Natural killer cell (primary cell): ENCODE measurements at regions of chr7 and their contacts with region 1.

Region 1: DNA sequence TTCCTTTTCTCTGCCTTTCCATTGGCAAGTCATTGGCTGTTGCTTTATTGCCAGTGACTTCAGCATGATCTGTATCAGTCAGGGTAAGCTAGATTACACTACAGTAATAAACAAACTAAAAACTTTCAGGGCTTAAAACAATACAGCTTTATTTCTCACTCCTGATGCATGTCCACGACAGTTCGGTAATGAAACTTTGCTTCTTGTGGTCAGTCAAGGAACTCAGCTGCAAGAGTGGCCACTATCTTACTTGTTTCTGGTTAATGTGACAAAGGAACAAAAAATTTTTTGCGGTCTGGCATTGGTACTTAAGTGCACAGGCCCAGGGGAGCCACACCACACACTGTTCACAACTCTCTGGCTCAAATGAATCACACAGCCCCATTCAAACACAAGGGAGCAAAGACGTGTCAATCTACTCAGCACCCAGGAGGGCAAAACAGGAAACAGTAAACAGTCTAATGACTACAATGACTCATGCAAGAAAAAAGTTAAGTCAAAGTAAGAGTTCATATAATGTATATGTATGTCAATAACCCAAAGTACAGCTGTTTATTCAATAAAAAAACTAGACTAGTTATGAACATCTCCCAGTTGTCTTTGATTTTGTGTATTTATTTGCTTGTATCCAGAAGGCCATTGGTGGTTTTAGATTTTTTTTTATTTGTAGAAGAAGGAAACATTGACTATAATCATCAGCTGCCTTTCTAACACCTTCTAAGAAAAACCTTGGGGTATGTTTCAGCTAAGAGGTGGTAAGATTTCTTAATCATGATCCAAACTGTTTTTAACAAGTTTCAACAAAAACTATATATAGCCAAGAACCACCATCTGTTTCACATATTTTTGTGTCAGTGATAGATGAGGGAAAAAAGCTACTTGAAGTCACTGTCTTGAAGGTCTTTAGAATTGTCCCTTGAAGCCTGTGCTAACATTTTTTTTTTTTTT is 134.4 kb upstream of the FAM3C start:
- DNase-seq: peak; percentile 62 to 70
- ATAC-seq: peak; percentile 90 to 97 (median 94)
- H3K4me3 ChIP-seq: no peak overlapping the region
- H3K4me3 Mint-ChIP-seq: peak overlapping the region; percentile 85
- H3K27ac ChIP-seq: peak overlapping the region; percentile 75
- H3K27ac Mint-ChIP-seq: peak overlapping the region; percentile 89 to 92
- H3K4me1 ChIP-seq: peaks cover 10% of the 10 kb centered on the region
- H3K4me1 Mint-ChIP-seq: peaks cover 50 to 51% of the 10 kb centered on the region in 2 donors
- H3K27me3 ChIP-seq: no peaks in the 10 kb centered on the region
- H3K27me3 Mint-ChIP-seq: no peaks in the 10 kb centered on the region
- CTCF ChIP-seq: no peak

Region 2: DNA sequence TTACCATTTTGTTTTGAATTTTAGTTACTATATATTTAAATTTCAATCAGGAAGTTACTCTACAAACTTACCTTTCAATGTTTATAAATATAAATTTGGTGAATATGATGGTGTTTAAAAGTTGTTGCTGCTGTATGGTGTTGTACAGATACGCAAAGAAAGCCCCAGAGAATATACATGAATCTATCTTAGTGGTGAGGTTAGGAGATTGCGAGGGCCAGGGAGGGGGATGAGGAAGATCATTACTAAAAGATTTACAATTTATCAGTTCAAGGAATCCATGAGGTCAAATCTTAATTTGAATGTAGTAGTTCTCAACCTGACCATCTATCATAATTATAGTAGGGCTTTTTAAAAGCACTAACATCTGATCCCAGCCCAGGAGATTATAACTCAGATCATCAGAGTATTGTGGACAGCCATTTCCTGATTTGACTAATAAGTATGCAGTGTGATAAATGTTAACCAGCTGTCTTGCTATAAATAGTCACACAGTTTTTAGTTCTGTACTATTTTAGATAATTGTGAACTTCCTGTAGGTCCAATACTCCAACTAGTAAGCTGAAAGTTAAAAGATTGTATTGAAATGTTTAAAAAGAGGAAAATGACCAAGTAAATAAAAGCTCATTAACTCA is 158.0 kb before region 1 on chr7:
- intact Hi-C with region 1: loop called (anchors 5 kb)
- DNase-seq: peak in 1 of 2 donors; percentile 23
- ATAC-seq: peak; percentile 90 to 92 (median 91)
- H3K4me3 ChIP-seq: peak overlapping the region; percentile 7
- H3K4me3 Mint-ChIP-seq: peak overlapping the region; percentile 84
- H3K27ac ChIP-seq: peak overlapping the region; percentile 74
- H3K27ac Mint-ChIP-seq: peak overlapping the region; percentile 81 to 88
- H3K4me1 ChIP-seq: peaks cover 21% of the 10 kb centered on the region
- H3K4me1 Mint-ChIP-seq: peaks cover 37 to 57% of the 10 kb centered on the region in 2 donors
- H3K27me3 ChIP-seq: no peaks in the 10 kb centered on the region
- H3K27me3 Mint-ChIP-seq: no peaks in the 10 kb centered on the region
- CTCF ChIP-seq: no peak

Region 3: GRCh38 chr7:121395961-121396757 is 134.3 kb before region 1 on chr7 and contains the start of gene FAM3C:
- intact Hi-C with region 1: loop called (anchors 5 kb)
- DNase-seq: peak; percentile 86
- ATAC-seq: peak; percentile 89 to 96 (median 91)
- H3K4me3 ChIP-seq: peak within 1 kb of the TSS; percentile 68
- H3K4me3 Mint-ChIP-seq: peak within 1 kb of the TSS; percentile 92
- H3K27ac ChIP-seq: peak within 1 kb of the TSS; percentile 76
- H3K27ac Mint-ChIP-seq: peak within 1 kb of the TSS; percentile 83 to 90
- H3K4me1 ChIP-seq: peaks cover 2% of the 10 kb centered on the region
- H3K4me1 Mint-ChIP-seq: peaks cover 26 to 28% of the 10 kb centered on the region in 2 donors
- H3K27me3 ChIP-seq: no peaks in the 10 kb centered on the region
- H3K27me3 Mint-ChIP-seq: no peaks in the 10 kb centered on the region
- CTCF ChIP-seq: peak; percentile 97
- total RNA-seq, gene FAM3C: 24.3 to 42.1 (median 37.0) TPM

Region 4: GRCh38 chr7:121410829-121411596 is 119.5 kb before region 1 on chr7:
- intact Hi-C with region 1: no loop called
- DNase-seq: no peak
- ATAC-seq: no peak
- H3K4me3 ChIP-seq: no peak overlapping the region
- H3K4me3 Mint-ChIP-seq: no peak overlapping the region
- H3K27ac ChIP-seq: no peak overlapping the region
- H3K27ac Mint-ChIP-seq: no peak overlapping the region
- H3K4me1 ChIP-seq: no peaks in the 10 kb centered on the region
- H3K4me1 Mint-ChIP-seq: peaks cover 5 to 6% of the 10 kb centered on the region in 2 donors
- H3K27me3 ChIP-seq: no peaks in the 10 kb centered on the region
- H3K27me3 Mint-ChIP-seq: peaks cover 9 to 13% of the 10 kb centered on the region in 2 donors
- CTCF ChIP-seq: no peak

Region 5: GRCh38 chr7:121493553-121493952 is 36.9 kb before region 1 on chr7:
- intact Hi-C with region 1: no loop called
- DNase-seq: no peak
- ATAC-seq: no peak
- H3K4me3 ChIP-seq: no peak overlapping the region
- H3K4me3 Mint-ChIP-seq: no peak overlapping the region
- H3K27ac ChIP-seq: no peak overlapping the region
- H3K27ac Mint-ChIP-seq: no peak overlapping the region
- H3K4me1 ChIP-seq: no peaks in the 10 kb centered on the region
- H3K4me1 Mint-ChIP-seq: no peaks in the 10 kb centered on the region
- H3K27me3 ChIP-seq: no peaks in the 10 kb centered on the region
- H3K27me3 Mint-ChIP-seq: peaks cover 0 to 3% of the 10 kb centered on the region in 2 donors
- CTCF ChIP-seq: no peak

Region 6: DNA sequence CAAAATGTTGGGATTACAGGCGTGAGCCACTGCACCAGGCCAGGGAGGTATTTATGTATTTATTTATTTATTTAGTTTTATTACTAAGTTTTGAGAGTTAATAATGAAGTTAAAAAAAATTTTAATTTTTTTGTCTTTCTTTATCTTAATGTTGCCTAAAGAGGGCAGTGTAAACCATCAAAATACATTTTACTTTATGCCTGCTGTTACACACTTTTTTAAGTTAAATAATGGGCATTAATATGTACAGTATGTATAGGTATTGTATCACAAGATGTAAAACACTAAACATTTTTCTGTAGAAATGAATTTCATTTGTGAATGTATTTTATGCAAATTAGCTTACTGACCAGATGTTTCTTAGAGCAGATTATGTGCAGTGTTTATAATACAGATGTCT is 484.2 kb after region 1 on chr7:
- intact Hi-C with region 1: no loop called
- DNase-seq: no peak
- ATAC-seq: no peak
- H3K4me3 ChIP-seq: no peak overlapping the region
- H3K4me3 Mint-ChIP-seq: no peak overlapping the region
- H3K27ac ChIP-seq: no peak overlapping the region
- H3K27ac Mint-ChIP-seq: no peak overlapping the region
- H3K4me1 ChIP-seq: no peaks in the 10 kb centered on the region
- H3K4me1 Mint-ChIP-seq: no peaks in the 10 kb centered on the region
- H3K27me3 ChIP-seq: no peaks in the 10 kb centered on the region
- H3K27me3 Mint-ChIP-seq: no peaks in the 10 kb centered on the region
- CTCF ChIP-seq: no peak